IMR-90 (cell line): ENCODE measurements at regions of chr1 and their contacts with region 1.

Region 1: DNA sequence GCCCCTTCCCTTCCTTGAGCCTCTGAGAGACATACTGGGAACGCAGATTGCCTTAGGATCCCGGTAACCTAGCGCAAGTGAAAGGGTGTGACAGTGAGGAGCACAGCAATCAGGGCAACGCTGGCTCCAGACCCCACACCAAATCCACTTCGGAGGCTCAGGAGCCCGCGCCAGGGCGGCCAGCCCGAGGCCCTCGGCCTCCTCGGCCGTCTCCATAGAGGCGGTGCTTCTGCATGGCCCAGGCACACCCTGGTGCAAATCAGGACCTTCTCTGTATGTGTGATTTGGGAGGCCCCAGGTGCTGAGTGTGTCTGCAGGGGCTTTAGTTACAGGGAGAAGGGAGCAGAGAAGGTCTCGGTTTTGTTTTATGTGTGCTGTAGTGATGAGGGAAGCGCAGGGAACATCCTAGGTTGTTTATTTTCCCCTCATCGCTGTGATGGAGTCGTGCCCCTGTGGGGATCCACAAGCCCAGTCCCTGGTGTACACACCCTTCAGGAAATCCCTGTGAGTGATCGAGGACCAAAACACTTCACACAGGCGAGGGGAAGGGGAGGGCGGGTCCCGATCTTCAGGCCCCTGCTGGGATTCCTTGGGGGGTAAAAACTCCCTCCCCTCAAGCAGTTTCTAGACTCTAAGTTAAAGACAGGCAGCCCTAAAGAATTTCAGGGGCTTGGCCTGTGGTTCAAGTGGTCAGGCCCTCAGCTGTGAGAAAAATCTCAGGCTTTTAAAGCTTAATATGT is 9.4 kb downstream of the KIAA1614 start:
- DNase-seq: no peak
- ATAC-seq: no peak
- H3K4me3 ChIP-seq: no peak overlapping the region
- H3K27ac ChIP-seq: no peak overlapping the region
- H3K4me1 ChIP-seq: peaks cover 7% of the 10 kb centered on the region
- H3K27me3 ChIP-seq: no peaks in the 10 kb centered on the region
- CTCF ChIP-seq: no peak
- POLR2A ChIP-seq: no peak
- RAD21 ChIP-seq: no peak

Region 2: DNA sequence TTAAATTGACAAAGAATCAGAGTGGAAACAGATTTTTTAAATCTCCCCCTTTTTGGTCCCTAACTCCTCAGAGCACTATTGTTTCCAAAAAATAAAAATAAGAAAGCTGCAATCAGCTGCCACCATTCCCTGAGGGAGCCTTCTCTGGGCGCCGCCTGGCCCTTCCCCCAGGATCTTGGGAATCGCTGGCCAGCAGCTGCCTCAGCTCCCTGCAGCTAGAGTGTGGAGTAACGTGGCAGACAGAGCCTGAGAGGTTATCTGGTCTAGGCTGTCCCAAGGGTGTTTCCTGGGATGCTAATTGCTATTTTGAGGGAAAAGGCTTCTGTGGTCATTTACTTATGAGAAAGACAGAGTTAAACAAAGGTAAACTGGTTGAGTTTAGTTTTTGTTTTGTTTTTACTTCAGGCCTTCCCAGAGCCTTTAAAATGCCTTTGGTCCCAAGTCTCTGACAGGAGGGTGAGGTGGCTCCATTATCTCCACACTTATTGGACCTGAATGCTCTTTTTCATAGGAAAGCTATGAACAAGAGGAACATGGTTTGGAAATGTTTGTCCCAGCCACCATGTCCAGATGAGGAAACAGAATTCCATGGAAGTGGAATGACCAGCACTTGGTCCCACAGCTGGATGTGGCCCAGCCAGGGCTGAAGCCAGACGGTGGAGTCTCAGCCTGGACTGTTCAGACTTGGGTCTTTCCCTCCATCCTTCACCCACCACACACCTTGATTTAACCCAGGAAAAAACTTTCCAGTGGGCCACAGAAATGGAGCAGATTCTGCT is 23.4 kb before region 1 on chr1:
- CTCF ChIA-PET with region 1: no interaction called
- POLR2A ChIA-PET with region 1: no interaction called
- dilution Hi-C with region 1: no loop called
- in situ Hi-C with region 1: no loop called
- intact Hi-C with region 1: no loop called
- DNase-seq: peak; percentile 12
- ATAC-seq: peak; percentile 89
- H3K4me3 ChIP-seq: no peak overlapping the region
- H3K27ac ChIP-seq: no peak overlapping the region
- H3K4me1 ChIP-seq: 0 out of 2 replicates have a peak, but pooled peaks cover 2% of the 10 kb centered on the region
- H3K27me3 ChIP-seq: no peaks in the 10 kb centered on the region
- CTCF ChIP-seq: no peak
- POLR2A ChIP-seq: no peak
- RAD21 ChIP-seq: no peak

Region 3: DNA sequence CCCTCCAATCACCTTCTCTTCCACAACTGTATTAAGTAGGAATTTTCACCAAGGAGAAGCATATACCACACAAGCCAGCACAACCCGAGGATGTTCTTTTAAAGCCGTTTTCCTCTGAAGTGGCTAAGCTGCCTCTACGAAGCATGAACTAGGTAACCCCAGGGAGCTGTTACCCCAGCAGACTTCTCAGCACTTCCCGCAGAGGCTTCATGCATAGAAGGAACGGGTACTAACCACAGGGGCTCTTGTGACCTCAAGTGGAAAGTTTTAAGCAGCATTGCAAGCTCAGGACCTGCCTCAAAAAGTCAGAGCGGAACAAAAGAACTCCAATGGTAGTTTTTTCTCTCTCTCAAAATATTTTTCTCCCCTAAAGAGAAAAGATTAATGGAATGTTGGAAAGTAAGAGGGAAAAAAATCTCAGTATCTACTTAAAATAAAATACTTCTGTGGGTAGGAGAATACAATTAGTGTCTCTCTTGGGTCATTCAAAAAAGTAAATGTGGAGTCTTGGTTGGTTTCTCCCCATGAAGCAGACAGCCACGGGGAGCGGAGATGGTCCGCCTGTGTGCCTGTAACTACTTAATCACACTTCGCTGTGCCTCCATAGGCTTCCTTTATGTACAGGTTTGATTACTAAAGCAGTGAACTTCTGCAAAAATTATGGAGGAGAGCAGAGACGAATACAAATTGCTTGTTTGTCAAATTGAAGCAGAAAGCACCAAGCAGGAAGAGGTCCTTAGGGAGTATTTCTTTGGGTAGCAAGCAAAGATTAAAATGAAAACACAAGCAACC is 59.7 kb after region 1 on chr1:
- CTCF ChIA-PET with region 1: no interaction called
- POLR2A ChIA-PET with region 1: no interaction called
- dilution Hi-C with region 1: no loop called
- in situ Hi-C with region 1: no loop called
- intact Hi-C with region 1: no loop called
- DNase-seq: no peak
- ATAC-seq: no peak
- H3K4me3 ChIP-seq: no peak overlapping the region
- H3K27ac ChIP-seq: no peak overlapping the region
- H3K4me1 ChIP-seq: peaks cover 8% of the 10 kb centered on the region
- H3K27me3 ChIP-seq: no peaks in the 10 kb centered on the region
- CTCF ChIP-seq: no peak
- POLR2A ChIP-seq: no peak
- RAD21 ChIP-seq: no peak

Region 4: GRCh38 chr1:181062836-181063428 is 140.9 kb after region 1 on chr1:
- CTCF ChIA-PET with region 1: no interaction called
- POLR2A ChIA-PET with region 1: no interaction called
- dilution Hi-C with region 1: no loop called
- in situ Hi-C with region 1: no loop called
- intact Hi-C with region 1: no loop called
- DNase-seq: peak; percentile 66
- ATAC-seq: no peak; the same call in 1 of the 2 replicates
- H3K4me3 ChIP-seq: no peak overlapping the region
- H3K27ac ChIP-seq: no peak overlapping the region
- H3K4me1 ChIP-seq: peaks cover 3% of the 10 kb centered on the region
- H3K27me3 ChIP-seq: no peaks in the 10 kb centered on the region
- CTCF ChIP-seq: no peak
- POLR2A ChIP-seq: no peak
- RAD21 ChIP-seq: no peak

Region 5: GRCh38 chr1:182391362-182392044 is 1469.4 kb after region 1 on chr1 and contains the start of gene GLUL:
- CTCF ChIA-PET with region 1: no interaction called
- POLR2A ChIA-PET with region 1: interaction called, 12 read pairs
- dilution Hi-C with region 1: no loop called
- in situ Hi-C with region 1: no loop called
- intact Hi-C with region 1: no loop called
- DNase-seq: peak; percentile 89
- ATAC-seq: peak; percentile 94
- H3K4me3 ChIP-seq: peak within 1 kb of the TSS; percentile 91
- H3K27ac ChIP-seq: peak within 1 kb of the TSS; percentile 88
- H3K4me1 ChIP-seq: peaks cover 3% of the 10 kb centered on the region
- H3K27me3 ChIP-seq: no peaks in the 10 kb centered on the region
- CTCF ChIP-seq: no peak; the same call in 1 of the 2 replicates
- POLR2A ChIP-seq: peak; percentile 98
- RAD21 ChIP-seq: no peak
- total RNA-seq, gene GLUL: 236 and 385 TPM in 2 replicates